ENCODE measurements at regions of chr5 and their contacts with region 1.

Region 1: GRCh38 chr5:138575194-138576015 is at the start of gene HSPA9:
- DNase-seq: peak; percentile 92 to 99 (median 98)
- ATAC-seq: peak; percentile 89
- H3K4me3 ChIP-seq: peak within 1 kb of the TSS; percentile 91
- H3K4me3 Mint-ChIP-seq: peak within 1 kb of the TSS; percentile 94 to 99 (median 97)
- H3K27ac ChIP-seq: peak within 1 kb of the TSS; percentile 94
- H3K27ac Mint-ChIP-seq: peak within 1 kb of the TSS; percentile 100
- H3K4me1 ChIP-seq: peaks cover 10 to 15% of the 10 kb centered on the region in 2 donors
- H3K4me1 Mint-ChIP-seq: peaks cover 15 to 48% (median 43%) of the 10 kb centered on the region in 7 donors
- H3K27me3 ChIP-seq: no peaks in the 10 kb centered on the region
- H3K27me3 Mint-ChIP-seq: peaks cover 0 to 4% (median 0%) of the 10 kb centered on the region in 5 donors
- total RNA-seq, gene HSPA9: 152 to 274 (median 185) TPM

Region 2: DNA sequence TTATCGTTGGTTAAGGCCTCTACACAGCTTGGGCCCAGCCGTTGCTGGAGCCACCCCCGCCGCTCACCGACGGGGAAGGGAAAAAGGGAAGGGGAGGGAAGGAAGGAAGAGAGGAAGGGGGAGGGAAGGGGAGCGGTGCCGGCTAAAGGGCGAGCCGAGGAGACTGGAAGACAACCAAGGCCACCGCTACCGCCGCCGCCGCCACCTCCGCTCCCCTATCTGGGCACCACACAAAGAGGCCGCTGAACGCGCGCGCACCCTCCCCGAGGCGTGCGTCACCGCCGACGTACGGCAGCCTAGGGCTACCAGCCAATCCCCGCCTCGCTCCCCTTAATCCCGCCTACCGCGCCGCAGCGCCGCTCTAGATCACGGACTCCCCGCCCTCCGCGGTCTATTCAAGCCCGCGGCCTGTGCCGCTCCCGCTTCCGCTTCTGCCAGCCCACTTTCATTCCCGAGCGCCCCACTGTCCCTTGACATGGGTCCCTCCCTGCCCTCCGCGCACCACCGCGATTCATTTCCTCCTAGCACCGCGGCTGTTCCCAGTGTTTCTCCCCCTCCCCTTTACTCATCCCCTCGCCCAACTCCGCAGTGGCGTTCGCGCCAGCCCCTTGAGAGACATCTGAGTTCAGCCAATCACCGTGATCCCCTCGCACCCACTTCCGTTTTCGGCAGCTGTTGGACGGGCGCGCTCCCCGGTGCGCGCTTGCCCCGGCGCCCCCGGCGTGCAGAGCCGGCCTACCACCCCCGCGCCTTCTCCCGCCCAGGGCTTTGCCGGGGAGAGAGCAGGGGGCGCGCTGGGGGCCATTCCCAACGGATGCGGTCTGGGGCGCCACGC is 821.1 kb before region 1 on chr5 and contains the start of gene HNRNPA0:
- CTCF ChIA-PET with region 1: no interaction called
- POLR2A ChIA-PET with region 1: interaction called, 5 read pairs
- intact Hi-C with region 1: loop called in 1 of 2 experiments (anchors 2 kb)
- DNase-seq: peak; percentile 94 to 99 (median 98)
- ATAC-seq: peak; percentile 90
- H3K4me3 ChIP-seq: peak within 1 kb of the TSS; percentile 98
- H3K4me3 Mint-ChIP-seq: peak within 1 kb of the TSS; percentile 85 to 100 (median 98)
- H3K27ac ChIP-seq: peak within 1 kb of the TSS; percentile 98
- H3K27ac Mint-ChIP-seq: peak within 1 kb of the TSS; percentile 99 to 100 (median 100)
- H3K4me1 ChIP-seq: peaks cover 17 to 20% of the 10 kb centered on the region in 2 donors
- H3K4me1 Mint-ChIP-seq: peaks cover 21 to 43% (median 31%) of the 10 kb centered on the region in 7 donors
- H3K27me3 ChIP-seq: no peaks in the 10 kb centered on the region
- H3K27me3 Mint-ChIP-seq: peaks cover 0 to 2% (median 0%) of the 10 kb centered on the region in 5 donors
- total RNA-seq, gene HNRNPA0: 30.0 to 40.2 (median 30.7) TPM

Region 3: DNA sequence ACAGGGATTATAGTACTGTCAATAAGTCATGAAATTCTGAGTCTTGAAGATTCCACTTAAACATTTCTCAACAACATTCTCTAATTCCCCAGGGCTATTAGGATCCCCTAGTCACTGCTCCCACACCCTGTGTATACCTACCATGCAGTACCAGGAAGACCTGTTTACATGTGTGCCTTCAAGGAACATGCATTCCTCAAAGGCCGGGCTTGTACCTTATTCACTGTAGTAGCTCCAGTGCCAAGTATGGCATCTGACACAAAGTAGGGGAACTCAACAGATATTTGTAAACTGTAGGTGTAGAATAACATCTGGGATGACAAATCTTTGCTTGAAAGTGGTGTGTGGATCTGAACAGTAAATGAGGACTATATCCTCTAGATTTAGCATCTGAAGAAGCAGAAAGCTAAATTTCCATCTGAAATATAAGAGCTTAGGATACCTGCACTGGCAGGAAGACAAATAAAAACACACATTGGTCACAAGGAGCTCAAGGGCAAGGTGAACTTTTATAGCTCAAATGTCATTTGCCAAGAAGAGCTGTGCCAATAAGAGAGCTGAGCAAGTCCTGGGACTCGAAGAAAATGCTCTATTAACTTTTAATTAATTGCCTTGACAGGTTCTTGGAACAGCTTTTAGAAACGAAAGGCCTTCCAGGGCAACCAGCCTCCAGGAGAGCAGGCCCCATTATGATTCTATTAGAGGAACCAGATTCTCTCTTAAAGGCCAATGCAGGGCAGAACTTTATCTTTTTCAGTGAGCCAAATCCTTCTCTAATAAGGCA is 760.0 kb before region 1 on chr5:
- CTCF ChIA-PET with region 1: no interaction called
- POLR2A ChIA-PET with region 1: no interaction called
- intact Hi-C with region 1: no loop called
- DNase-seq: no peak
- ATAC-seq: no peak
- H3K4me3 ChIP-seq: no peak overlapping the region
- H3K4me3 Mint-ChIP-seq: no peak overlapping the region
- H3K27ac ChIP-seq: no peak overlapping the region
- H3K27ac Mint-ChIP-seq: no peak overlapping the region
- H3K4me1 ChIP-seq: no peaks in the 10 kb centered on the region
- H3K4me1 Mint-ChIP-seq: no peaks in the 10 kb centered on the region
- H3K27me3 ChIP-seq: no peaks in the 10 kb centered on the region
- H3K27me3 Mint-ChIP-seq: no peaks in the 10 kb centered on the region

Region 4: DNA sequence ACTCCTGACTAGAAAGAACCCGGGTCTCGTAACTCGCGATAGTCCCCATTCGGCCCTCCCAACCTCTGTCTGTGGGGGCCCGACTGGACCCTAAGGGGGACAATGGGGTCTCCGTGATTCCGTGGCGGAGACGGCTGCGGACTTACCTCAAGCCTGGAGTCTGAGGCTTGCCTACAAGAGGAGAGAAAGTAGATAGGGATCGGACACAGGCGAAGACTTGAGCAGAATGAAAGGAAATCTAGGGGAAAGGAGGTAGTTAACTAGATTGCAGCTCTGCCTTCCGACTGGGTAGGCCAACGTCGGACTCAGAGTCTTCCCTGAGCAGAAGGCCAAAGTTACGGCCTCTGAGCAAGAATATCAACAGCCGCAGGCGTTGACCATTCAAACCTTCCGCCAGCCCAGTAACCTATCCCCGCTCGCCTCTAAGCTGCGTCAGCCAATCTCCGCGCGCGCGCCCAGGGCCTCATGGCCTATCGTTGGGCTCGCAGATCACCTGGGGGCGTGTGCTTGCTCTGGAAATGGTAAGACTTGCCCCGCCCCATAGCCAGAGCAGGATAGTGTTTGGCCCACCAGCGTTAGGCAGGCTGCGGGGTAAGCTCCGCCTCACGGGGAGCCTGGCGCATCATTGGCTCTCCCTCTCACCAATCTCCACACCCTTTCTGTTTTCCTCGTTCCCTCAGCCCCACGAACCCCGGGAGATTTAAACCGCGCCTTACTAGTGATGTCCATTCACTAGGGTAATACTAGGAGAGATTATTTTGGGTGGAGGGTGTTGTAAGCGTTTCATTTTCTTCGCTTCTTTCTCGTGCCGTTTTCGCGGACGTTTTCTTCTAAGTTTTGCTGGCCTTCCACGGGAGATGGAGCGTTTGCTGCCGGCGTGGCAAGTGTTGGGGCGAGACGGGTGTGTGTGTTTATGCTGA is 243.7 kb before region 1 on chr5 and contains the start of gene CDC25C:
- CTCF ChIA-PET with region 1: no interaction called
- POLR2A ChIA-PET with region 1: interaction called, 6 read pairs
- intact Hi-C with region 1: loop called in 1 of 2 experiments (anchors 2 kb)
- DNase-seq: peak; percentile 87 to 98 (median 96)
- ATAC-seq: peak; percentile 100
- H3K4me3 ChIP-seq: peak within 1 kb of the TSS; percentile 85
- H3K4me3 Mint-ChIP-seq: peak within 1 kb of the TSS; percentile 83 to 95 (median 86)
- H3K27ac ChIP-seq: peak within 1 kb of the TSS; percentile 49
- H3K27ac Mint-ChIP-seq: peak within 1 kb of the TSS; percentile 48 to 92 (median 68)
- H3K4me1 ChIP-seq: peaks cover 1 to 7% of the 10 kb centered on the region in 2 donors
- H3K4me1 Mint-ChIP-seq: peaks cover 7 to 35% (median 14%) of the 10 kb centered on the region in 7 donors
- H3K27me3 ChIP-seq: no peaks in the 10 kb centered on the region
- H3K27me3 Mint-ChIP-seq: no peaks in the 10 kb centered on the region
- total RNA-seq, gene CDC25C: 9.8 TPM in 1 of 5 experiments, not detected in the others

Region 5: DNA sequence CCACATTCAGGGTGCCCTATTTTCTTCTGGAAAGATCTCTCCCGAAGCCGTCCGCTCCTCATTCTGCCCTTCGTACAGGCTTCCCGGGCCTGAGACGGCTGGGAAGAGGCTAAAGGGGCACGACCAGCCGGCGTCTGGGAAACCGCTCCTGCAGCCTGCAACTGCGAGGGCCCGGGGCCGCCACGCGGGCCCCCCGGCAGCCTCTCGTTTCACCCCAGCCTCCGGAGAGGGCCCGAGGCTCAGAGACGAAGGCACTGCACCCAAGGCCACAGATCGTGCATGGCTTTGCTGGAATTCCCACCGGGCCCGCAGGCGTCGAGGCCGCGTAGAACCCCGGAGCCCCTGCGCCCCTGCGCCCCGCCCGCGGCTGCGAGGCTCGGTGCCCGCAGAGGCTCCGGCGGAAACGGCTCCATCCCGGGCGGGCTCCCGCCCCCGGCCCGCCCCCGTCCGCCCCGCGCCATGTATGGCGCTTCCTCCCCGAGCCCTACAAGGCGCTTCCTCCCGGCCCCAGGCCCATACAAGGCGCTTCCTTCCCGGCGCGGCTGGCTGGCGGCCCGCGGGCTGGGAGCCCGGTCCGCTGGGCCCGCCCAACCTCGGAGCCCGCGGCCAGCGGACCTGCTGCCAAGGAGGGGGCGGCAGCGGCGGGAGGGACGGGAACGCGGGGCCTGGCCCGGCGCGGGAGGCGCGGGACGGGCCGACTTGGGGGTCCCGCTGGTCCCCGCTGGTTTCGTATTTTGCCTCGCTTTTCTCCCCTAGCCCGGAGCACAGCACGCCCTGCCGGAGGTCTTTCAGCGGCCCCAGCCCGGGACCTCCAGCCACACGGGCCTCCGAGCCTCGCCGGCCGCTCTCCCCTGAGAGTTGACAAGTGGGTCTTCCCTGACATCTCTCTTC is 83.5 kb before region 1 on chr5:
- CTCF ChIA-PET with region 1: no interaction called
- POLR2A ChIA-PET with region 1: interaction called, 4 read pairs
- intact Hi-C with region 1: loop called in 1 of 2 experiments (anchors 1 kb)
- DNase-seq: peak; percentile 66 to 87 (median 81)
- ATAC-seq: peak; percentile 99
- H3K4me3 ChIP-seq: peak overlapping the region; percentile 69
- H3K4me3 Mint-ChIP-seq: peak overlapping the region; percentile 76 to 97 (median 92)
- H3K27ac ChIP-seq: peak overlapping the region; percentile 37
- H3K27ac Mint-ChIP-seq: peak overlapping the region in 7 of 9 donors; percentile 40 to 90 (median 67)
- H3K4me1 ChIP-seq: peaks cover 13 to 14% of the 10 kb centered on the region in 2 donors
- H3K4me1 Mint-ChIP-seq: peaks cover 8 to 21% (median 13%) of the 10 kb centered on the region in 7 donors
- H3K27me3 ChIP-seq: peaks cover 0 to 6% of the 10 kb centered on the region in 2 donors
- H3K27me3 Mint-ChIP-seq: peaks cover 0 to 38% (median 5%) of the 10 kb centered on the region in 5 donors

Region 6: DNA sequence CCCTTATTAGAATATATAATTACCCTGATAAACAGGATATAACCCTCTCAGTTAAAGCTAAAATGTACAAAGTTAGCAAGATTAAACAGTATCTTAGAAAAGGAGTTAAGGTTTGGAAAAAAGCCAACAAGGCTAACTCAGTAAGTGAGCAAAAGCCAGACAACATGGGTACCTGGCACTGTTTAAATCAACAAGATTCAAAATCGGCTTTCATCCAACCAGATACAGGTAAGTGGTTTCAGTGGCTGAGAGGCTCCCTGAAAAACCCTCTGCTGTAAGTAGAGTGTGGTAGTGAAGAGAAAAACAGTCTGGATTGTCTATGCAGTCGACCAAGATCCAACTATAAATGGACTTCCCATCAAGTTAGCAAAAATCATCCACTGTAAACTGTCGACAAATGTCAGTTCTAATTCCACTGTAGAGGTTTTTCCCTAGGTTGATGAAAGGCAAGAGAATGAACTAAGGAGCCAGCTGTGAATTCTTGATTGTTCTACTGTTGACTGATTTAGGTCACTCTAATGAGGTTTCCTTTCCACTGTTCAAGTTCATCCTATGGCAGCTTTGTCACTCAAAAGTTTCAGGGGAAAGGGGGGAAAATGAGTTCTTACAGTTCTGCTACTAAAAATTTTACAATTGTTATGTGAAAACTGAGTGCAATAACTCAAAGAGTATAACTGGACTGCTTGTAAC is 59.7 kb before region 1 on chr5:
- CTCF ChIA-PET with region 1: no interaction called
- POLR2A ChIA-PET with region 1: no interaction called
- intact Hi-C with region 1: no loop called
- DNase-seq: no peak
- ATAC-seq: no peak
- H3K4me3 ChIP-seq: no peak overlapping the region
- H3K4me3 Mint-ChIP-seq: no peak overlapping the region
- H3K27ac ChIP-seq: no peak overlapping the region
- H3K27ac Mint-ChIP-seq: peak overlapping the region in 1 of 9 donors; percentile 9
- H3K4me1 ChIP-seq: no peaks in the 10 kb centered on the region
- H3K4me1 Mint-ChIP-seq: peaks cover 4 to 11% (median 6%) of the 10 kb centered on the region in 7 donors
- H3K27me3 ChIP-seq: no peaks in the 10 kb centered on the region
- H3K27me3 Mint-ChIP-seq: no peaks in the 10 kb centered on the region

Region 7: DNA sequence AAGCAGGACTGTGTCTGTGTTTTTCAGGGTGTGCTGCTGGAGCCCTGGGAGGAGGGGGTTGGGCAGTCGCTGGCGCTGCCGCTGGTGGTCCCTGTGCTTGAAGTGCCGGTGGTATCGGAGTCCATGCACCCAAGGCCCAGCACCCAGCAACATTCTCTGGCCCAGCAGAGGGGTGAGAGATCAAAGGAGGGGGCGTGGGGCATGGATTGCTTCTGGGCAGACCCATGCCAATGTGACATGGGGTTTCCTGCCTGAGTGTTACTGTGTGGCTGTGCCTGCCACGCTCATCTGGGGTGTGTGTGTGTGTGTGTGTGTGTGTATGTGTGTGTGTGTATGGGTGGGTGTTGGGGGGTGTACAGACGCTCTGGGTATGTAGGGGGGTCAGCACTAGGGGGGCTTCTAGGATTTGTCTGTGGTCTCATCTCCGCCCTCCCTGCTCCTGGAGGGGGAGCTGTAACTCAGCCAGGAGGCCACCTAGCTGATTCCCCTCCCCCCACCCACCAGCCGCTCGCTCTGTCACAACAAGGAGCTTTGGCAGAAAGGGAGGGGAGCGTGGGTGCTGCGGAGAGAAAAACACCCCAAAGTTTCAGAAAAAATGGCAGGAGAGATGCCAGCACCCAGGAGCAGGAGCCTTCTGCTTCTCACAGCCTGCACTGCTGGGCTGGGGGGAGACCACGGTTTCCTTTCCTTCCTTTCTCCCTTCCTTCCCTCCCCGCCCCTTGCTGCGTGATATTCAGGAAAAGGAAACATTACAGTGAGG is 35.7 kb after region 1 on chr5:
- CTCF ChIA-PET with region 1: no interaction called
- POLR2A ChIA-PET with region 1: no interaction called
- intact Hi-C with region 1: no loop called
- DNase-seq: peak in 2 of 9 donors; percentile 6 to 19
- ATAC-seq: peak; percentile 54
- H3K4me3 ChIP-seq: no peak overlapping the region
- H3K4me3 Mint-ChIP-seq: peak overlapping the region in 7 of 10 donors; percentile 11 to 60 (median 39)
- H3K27ac ChIP-seq: no peak overlapping the region
- H3K27ac Mint-ChIP-seq: no peak overlapping the region
- H3K4me1 ChIP-seq: peaks cover 0 to 10% of the 10 kb centered on the region in 2 donors
- H3K4me1 Mint-ChIP-seq: peaks cover 0 to 14% (median 13%) of the 10 kb centered on the region in 7 donors
- H3K27me3 ChIP-seq: peaks cover 0 to 5% of the 10 kb centered on the region in 2 donors
- H3K27me3 Mint-ChIP-seq: peaks cover 52 to 74% (median 54%) of the 10 kb centered on the region in 5 donors

Region 8: GRCh38 chr5:138752951-138753793 is 177.8 kb after region 1 on chr5 and contains the start of gene CTNNA1:
- CTCF ChIA-PET with region 1: no interaction called
- POLR2A ChIA-PET with region 1: no interaction called
- intact Hi-C with region 1: loop called (anchors 2 to 5 kb)
- DNase-seq: peak in 4 of 9 donors; percentile 11 to 67 (median 16)
- ATAC-seq: peak; percentile 68
- H3K4me3 ChIP-seq: peak within 1 kb of the TSS; percentile 50
- H3K4me3 Mint-ChIP-seq: peak within 1 kb of the TSS; percentile 60 to 89 (median 79)
- H3K27ac ChIP-seq: no peak within 1 kb of the TSS
- H3K27ac Mint-ChIP-seq: peak within 1 kb of the TSS in 5 of 9 donors; percentile 10 to 67 (median 24)
- H3K4me1 ChIP-seq: peaks cover 6 to 7% of the 10 kb centered on the region in 2 donors
- H3K4me1 Mint-ChIP-seq: peaks cover 8 to 23% (median 15%) of the 10 kb centered on the region in 7 donors
- H3K27me3 ChIP-seq: no peaks in the 10 kb centered on the region
- H3K27me3 Mint-ChIP-seq: peaks cover 42 to 51% (median 48%) of the 10 kb centered on the region in 5 donors
- total RNA-seq, gene CTNNA1: 3.7 to 52.9 (median 7.1) TPM

Region 9: DNA sequence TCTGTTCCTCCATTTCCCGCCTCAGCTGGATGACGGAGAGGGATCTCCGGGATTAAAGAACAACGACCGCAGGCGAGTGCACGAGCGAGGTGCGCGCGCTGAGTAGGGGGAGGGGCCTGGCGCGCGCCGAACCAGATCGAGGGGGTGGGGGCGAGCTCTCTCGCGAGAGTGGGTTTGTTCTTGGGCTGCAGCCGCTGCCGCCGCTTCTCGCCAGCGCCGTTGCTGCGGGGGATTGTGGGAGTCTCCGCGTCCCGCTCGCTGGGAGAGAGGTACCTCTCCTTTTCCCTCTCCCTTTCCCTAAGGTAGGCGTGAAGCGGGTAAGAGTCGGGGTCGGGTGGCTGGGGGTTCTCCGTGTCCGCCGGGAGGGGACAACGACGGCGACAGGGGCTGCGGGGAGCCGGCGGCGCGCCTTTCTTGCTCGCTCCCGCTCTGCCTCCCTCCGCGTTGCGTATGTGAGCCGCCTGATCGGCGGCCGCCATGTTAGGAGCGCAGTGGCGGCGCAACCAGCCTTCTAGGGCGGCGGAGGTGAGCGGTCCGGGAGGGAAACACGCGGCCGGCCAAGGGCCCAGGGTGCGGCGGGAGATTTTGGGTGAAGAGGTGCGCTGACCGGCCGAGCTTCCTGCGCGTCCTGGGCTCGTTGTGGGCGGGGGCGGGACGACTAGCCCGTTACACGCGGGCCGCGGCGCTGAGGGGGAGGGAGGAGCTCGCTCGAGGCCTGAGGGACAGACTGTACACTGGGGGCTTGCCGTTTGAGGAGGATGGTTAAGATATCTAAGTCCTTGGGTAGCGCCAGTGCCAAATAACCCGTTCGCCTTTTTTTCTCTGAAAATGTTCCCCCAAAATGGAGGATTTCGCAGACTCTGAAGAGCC is 718.3 kb after region 1 on chr5 and contains the start of gene MATR3:
- CTCF ChIA-PET with region 1: interaction called, 4 read pairs
- POLR2A ChIA-PET with region 1: interaction called, 11 read pairs
- intact Hi-C with region 1: loop called (anchors 1 kb)
- DNase-seq: peak; percentile 83 to 94 (median 91)
- ATAC-seq: peak; percentile 95
- H3K4me3 ChIP-seq: peak within 1 kb of the TSS; percentile 87
- H3K4me3 Mint-ChIP-seq: peak within 1 kb of the TSS; percentile 91 to 99 (median 98)
- H3K27ac ChIP-seq: peak within 1 kb of the TSS; percentile 98
- H3K27ac Mint-ChIP-seq: peak within 1 kb of the TSS; percentile 96 to 100 (median 99)
- H3K4me1 ChIP-seq: peaks cover 29 to 37% of the 10 kb centered on the region in 2 donors
- H3K4me1 Mint-ChIP-seq: peaks cover 33 to 51% (median 42%) of the 10 kb centered on the region in 7 donors
- H3K27me3 ChIP-seq: no peaks in the 10 kb centered on the region
- H3K27me3 Mint-ChIP-seq: no peaks in the 10 kb centered on the region
- total RNA-seq, gene MATR3: 219 to 333 (median 274) TPM

Region 10: GRCh38 chr5:140107312-140108083 is 1532.1 kb after region 1 on chr5:
- CTCF ChIA-PET with region 1: no interaction called
- POLR2A ChIA-PET with region 1: no interaction called
- intact Hi-C with region 1: loop called in 1 of 2 experiments (anchors 1 kb)
- DNase-seq: peak; percentile 87 to 96 (median 94)
- ATAC-seq: peak; percentile 92
- H3K4me3 ChIP-seq: peak overlapping the region; percentile 80
- H3K4me3 Mint-ChIP-seq: peak overlapping the region; percentile 93 to 99 (median 97)
- H3K27ac ChIP-seq: peak overlapping the region; percentile 91
- H3K27ac Mint-ChIP-seq: peak overlapping the region; percentile 96 to 99 (median 99)
- H3K4me1 ChIP-seq: peaks cover 19 to 35% of the 10 kb centered on the region in 2 donors
- H3K4me1 Mint-ChIP-seq: peaks cover 30 to 59% (median 47%) of the 10 kb centered on the region in 7 donors
- H3K27me3 ChIP-seq: peaks cover 0 to 7% of the 10 kb centered on the region in 2 donors
- H3K27me3 Mint-ChIP-seq: peaks cover 0 to 77% (median 4%) of the 10 kb centered on the region in 5 donors